Activated CD8-positive, alpha-beta T cell treated with anti-CD3 and anti-CD28 coated beads for 36 hours (primary cell): ENCODE measurements at regions of chr16 and their contacts with region 1.

Region 1: GRCh38 chr16:84116720-84117493 is at the start of gene MBTPS1:
- DNase-seq: peak; percentile 98
- ATAC-seq: peak; percentile 92
- H3K4me3 Mint-ChIP-seq: peak within 1 kb of the TSS; percentile 94
- H3K27ac Mint-ChIP-seq: peak within 1 kb of the TSS; percentile 95
- H3K4me1 Mint-ChIP-seq: peaks cover 26% of the 10 kb centered on the region
- H3K27me3 Mint-ChIP-seq: no peaks in the 10 kb centered on the region
- CTCF ChIP-seq: peak; percentile 4
- total RNA-seq, gene MBTPS1: 31.5 to 31.7 TPM

Region 2: DNA sequence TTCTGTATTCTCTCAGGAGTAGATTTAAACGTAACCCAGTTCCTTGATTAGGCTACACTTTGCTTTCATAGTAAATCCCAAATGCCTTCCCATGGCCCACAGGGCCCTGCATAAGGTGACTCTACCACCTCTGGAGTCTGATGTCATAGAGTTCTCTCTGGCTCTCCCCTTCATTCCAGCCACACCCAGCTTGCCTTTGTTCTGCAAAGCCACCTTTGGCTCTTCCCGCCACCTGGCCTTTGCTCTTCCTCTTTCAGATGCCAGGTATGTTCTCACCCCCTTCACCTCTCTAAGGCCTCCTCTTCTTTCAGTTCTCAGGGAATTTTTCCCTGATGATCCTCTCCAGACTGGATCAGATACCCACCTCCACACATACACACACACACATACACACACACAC is 450.5 kb before region 1 on chr16:
- CTCF ChIA-PET with region 1: no interaction called
- POLR2A ChIA-PET with region 1: no interaction called
- intact Hi-C with region 1: no loop called
- DNase-seq: no peak
- ATAC-seq: no peak
- H3K4me3 Mint-ChIP-seq: no peak overlapping the region
- H3K27ac Mint-ChIP-seq: no peak overlapping the region
- H3K4me1 Mint-ChIP-seq: no peaks in the 10 kb centered on the region
- H3K27me3 Mint-ChIP-seq: no peaks in the 10 kb centered on the region
- CTCF ChIP-seq: no peak

Region 3: GRCh38 chr16:84096115-84097012 is 20.5 kb before region 1 on chr16:
- CTCF ChIA-PET with region 1: interaction called, 5 read pairs
- POLR2A ChIA-PET with region 1: interaction called, 25 read pairs
- intact Hi-C with region 1: no loop called
- DNase-seq: no peak
- ATAC-seq: no peak
- H3K4me3 Mint-ChIP-seq: no peak overlapping the region
- H3K27ac Mint-ChIP-seq: no peak overlapping the region
- H3K4me1 Mint-ChIP-seq: peaks cover 14% of the 10 kb centered on the region
- H3K27me3 Mint-ChIP-seq: no peaks in the 10 kb centered on the region
- CTCF ChIP-seq: no peak

Region 4: DNA sequence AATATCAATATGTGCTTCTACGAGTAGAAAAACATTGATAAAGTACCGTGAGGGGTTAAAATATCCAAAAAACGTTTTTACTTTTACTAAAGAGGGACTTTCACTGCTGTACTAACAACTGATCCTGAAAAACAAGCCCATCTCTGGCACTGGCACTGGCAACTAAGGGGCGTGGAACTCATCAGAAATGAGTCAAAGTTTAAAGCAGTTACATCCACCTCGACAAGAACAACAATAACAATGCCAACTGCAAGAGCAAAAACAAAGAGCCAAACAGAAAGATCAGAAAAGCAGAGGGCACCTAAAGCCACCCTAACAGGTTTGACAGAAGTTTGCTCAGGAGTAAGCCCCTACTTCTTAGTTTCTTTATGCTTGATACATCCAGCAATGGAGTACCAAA is 13.2 kb before region 1 on chr16:
- CTCF ChIA-PET with region 1: interaction called, 16 read pairs
- POLR2A ChIA-PET with region 1: interaction called, 25 read pairs
- intact Hi-C with region 1: no loop called
- DNase-seq: no peak
- ATAC-seq: no peak
- H3K4me3 Mint-ChIP-seq: no peak overlapping the region
- H3K27ac Mint-ChIP-seq: peak overlapping the region; percentile 36
- H3K4me1 Mint-ChIP-seq: peaks cover 55% of the 10 kb centered on the region
- H3K27me3 Mint-ChIP-seq: no peaks in the 10 kb centered on the region
- CTCF ChIP-seq: no peak

Region 5: DNA sequence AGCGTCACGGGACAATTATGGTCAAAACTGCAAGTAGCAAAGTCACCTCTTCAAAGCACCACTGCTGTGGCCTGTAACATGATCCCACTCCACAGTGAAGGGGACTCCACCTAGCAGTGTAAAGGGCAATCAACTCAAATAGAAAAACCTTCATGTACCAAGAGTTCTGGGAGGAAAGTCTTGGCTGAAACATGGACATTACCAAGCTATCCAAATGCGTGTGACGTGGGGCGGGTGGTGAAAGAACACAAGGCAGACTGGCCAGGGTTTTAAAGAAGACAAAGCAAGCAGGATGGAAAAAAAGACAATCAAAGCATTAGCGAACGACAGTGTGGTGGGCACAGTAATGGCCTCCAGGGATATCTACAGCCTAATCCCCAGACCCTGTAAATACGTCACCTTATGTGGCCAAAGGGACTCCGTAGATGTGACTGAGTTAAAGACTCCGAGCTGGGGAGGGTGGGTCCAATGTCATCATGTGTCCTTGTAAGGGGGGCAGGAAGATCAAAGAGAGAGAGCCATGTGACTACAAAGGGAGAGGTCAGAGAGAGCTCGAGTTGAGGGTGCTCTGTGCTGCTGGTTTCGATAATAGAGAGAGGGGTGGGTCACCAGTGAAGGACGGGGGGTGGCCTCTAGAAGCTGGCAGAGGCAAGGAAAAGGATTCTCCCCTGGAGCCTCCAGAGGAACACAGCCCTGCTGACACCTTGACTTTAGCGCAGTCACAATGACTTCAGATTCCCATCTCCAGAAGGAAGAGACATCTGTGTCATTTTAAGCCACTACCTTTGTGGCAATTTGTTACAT is 22.1 kb after region 1 on chr16:
- CTCF ChIA-PET with region 1: interaction called, 11 read pairs
- POLR2A ChIA-PET with region 1: interaction called, 26 read pairs
- intact Hi-C with region 1: no loop called
- DNase-seq: peak; percentile 78
- ATAC-seq: peak; percentile 96
- H3K4me3 Mint-ChIP-seq: peak overlapping the region; percentile 4
- H3K27ac Mint-ChIP-seq: peak overlapping the region; percentile 82
- H3K4me1 Mint-ChIP-seq: peaks cover 56% of the 10 kb centered on the region
- H3K27me3 Mint-ChIP-seq: no peaks in the 10 kb centered on the region
- CTCF ChIP-seq: no peak

Region 6: DNA sequence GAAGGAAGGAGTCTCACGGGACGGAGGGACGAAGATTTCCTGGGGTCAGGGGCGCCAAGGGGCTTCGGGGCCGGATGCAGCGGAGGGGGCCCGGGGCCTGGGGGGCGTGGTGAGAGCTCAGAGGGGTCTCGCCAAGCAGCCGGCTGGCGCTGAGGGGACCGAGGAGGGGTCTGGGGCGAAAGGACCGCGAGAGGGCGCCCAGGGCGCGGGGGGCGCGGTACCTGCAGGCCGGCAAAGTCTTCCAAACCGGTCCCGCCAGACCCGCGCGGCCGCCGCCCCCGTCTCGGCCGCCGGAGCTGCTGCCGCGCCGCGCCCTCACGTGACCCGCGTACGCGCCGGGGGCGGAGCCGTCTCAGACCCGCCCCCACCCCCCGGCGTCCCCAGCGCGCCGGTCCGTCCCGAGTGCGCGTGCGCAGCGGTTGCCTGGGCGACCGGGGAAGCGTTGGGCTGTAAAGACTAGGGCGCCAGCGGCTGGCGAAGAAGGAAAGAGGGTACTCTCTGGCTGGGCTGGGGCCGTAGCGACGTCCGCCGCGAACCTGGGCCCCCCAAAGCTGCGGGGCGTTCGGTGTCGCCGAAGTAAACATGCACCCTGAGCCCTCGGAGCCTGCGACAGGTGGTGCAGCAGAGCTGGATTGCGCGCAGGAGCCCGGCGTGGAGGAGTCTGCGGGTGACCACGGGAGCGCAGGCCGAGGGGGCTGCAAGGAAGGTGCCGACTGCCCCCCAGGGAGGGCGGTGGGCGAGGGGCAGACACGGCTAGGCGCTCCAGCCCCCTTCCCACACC is 28.1 kb after region 1 on chr16 and contains the starts of genes DNAAF1 and HSDL1:
- CTCF ChIA-PET with region 1: interaction called, 11 read pairs
- POLR2A ChIA-PET with region 1: interaction called, 26 read pairs
- intact Hi-C with region 1: no loop called
- DNase-seq: peak; percentile 92
- ATAC-seq: peak; percentile 85
- H3K4me3 Mint-ChIP-seq: peak within 1 kb of the TSS; percentile 93
- H3K27ac Mint-ChIP-seq: peak within 1 kb of the TSS; percentile 82
- H3K4me1 Mint-ChIP-seq: peaks cover 22% of the 10 kb centered on the region
- H3K27me3 Mint-ChIP-seq: no peaks in the 10 kb centered on the region
- CTCF ChIP-seq: no peak
- total RNA-seq, gene DNAAF1: not detected
- total RNA-seq, gene HSDL1: 11.1 to 11.8 TPM

Region 7: DNA sequence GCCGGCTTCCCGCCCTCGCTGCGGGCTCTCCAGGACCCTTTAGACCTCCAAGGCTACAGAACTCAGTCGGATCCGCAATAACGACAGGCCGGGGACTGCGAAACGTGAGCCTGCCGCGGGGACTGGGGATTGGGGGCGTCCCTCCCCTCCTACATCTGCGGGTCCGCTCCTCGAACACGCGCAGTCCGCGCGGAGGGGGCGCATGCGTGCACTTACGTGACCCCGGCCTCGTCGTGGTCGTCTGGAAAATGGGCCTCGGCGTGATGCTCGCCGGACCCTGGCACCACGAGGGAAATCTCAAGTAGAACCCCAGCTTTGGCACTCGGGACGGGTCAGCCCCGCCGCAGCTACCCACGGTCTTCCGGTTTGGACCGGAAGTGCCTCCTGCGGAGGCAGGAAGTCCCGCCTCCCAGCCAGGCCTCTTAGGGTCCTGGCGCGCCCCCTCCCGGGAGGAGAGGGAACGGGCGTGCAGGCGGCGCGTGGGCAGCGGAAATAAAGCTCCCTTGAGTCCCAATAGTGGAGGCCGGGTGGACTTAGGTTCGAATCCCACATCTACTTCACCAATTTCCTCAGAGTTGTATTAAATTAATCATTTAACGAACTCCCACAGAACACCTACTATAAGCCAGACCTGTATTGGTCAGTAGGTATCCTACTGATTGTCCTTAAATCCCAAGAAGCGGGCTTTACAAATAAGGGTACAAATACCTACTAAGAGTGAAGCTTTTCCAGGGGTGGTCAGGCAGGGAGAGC is 70.0 kb after region 1 on chr16 and contains the start of gene TAF1C:
- CTCF ChIA-PET with region 1: interaction called, 27 read pairs
- POLR2A ChIA-PET with region 1: interaction called, 10 read pairs
- intact Hi-C with region 1: no loop called
- DNase-seq: peak; percentile 97
- ATAC-seq: peak; percentile 98
- H3K4me3 Mint-ChIP-seq: peak within 1 kb of the TSS; percentile 94
- H3K27ac Mint-ChIP-seq: peak within 1 kb of the TSS; percentile 95
- H3K4me1 Mint-ChIP-seq: peaks cover 14% of the 10 kb centered on the region
- H3K27me3 Mint-ChIP-seq: no peaks in the 10 kb centered on the region
- CTCF ChIP-seq: peak; percentile 86
- total RNA-seq, gene TAF1C: 59.3 to 62.6 TPM